Lower leg skin (tissue), 4 donors: ENCODE measurements at regions of chr6 and their contacts with region 1.

Region 1: DNA sequence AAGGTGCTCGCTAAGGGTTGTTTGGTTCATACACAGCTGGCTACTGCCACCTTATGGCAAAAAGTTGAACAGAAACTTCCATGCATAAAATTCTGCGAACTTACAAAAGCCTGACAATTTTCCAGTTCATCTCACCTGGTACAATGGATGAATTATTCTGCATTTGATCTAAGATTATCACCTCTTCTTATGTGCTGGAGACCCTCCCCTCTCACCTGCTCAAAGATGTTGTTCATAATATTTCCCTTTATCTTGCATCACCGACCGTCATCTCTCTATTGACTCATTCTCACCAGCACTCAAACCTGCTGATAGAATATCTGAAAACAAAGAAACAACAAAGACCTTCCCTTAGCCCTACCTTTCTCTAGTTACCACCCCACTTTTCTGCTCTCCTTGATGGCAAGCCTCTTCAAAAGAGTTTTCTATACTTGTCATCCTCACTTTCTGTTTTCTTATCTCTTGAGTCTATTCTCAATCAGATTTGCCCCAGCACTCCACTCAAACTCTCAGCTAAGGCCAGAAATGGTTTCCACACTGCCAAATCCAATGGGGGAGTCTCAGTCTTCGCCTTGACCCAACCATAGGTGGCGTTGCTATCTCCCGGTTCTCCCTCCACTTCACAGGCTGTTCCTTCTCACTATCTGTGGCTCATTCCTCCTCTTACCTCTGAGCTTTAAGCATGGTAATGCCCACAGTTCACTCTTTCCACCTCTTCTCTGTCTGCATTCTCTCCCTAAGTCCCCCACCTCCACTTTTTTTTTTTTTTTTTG is 25.8 kb downstream of the SNRNP48 start:
- DNase-seq: peak in 1 of 2 donors; percentile 42
- H3K4me3 ChIP-seq: no peak overlapping the region
- CTCF ChIP-seq: no peak
- POLR2A ChIP-seq: no peak

Region 2: DNA sequence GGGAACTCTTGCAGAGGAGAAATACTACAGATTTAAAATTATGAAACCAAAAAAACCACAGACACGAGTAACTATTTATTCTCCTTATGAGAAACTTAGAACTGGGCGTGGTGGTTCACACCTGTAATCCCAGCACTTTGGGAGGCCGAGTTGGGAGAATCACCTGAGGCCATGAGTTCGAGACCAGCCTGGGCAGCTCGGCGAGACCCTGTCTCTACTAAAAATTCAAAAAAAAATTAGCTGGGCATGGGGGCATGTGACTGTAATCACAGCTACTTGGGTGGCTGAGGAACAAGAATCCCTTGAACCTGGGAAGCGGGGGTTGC is 339.6 kb before region 1 on chr6:
- intact Hi-C with region 1: loop called (anchors 5 kb)
- DNase-seq: no peak
- H3K4me3 ChIP-seq: no peak overlapping the region
- CTCF ChIP-seq: no peak
- POLR2A ChIP-seq: no peak